ENCODE measurements at regions of chrX and their contacts with region 1.

Region 1: GRCh38 chrX:15299941-15300851 is 15.2 kb downstream of the ASB11 start:
- DNase-seq: no peak
- H3K4me3 ChIP-seq: no peak overlapping the region
- H3K27ac ChIP-seq: no peak overlapping the region
- H3K4me1 ChIP-seq: peaks cover 5% of the 10 kb centered on the region
- H3K27me3 ChIP-seq: no peaks in the 10 kb centered on the region
- CTCF ChIP-seq: peak; percentile 75

Region 2: GRCh38 chrX:16712112-16712833 is 1412.1 kb after region 1 on chrX and contains the start of gene CTPS2:
- CTCF ChIA-PET with region 1: interaction called, 14 read pairs
- POLR2A ChIA-PET with region 1: no interaction called
- intact Hi-C with region 1: no loop called
- DNase-seq: peak; percentile 49 to 63
- H3K4me3 ChIP-seq: peak within 1 kb of the TSS; percentile 78
- H3K27ac ChIP-seq: no peak within 1 kb of the TSS; the same call in 1 of the 2 replicates
- H3K4me1 ChIP-seq: no peaks in the 10 kb centered on the region
- H3K27me3 ChIP-seq: no peaks in the 10 kb centered on the region
- CTCF ChIP-seq: no peak
- total RNA-seq, gene CTPS2: 14.0 and 15.8 TPM in 2 replicates

Measured in PC-9 (cell line).